ENCODE measurements at regions of chr15 and their contacts with region 1.

Region 1: GRCh38 chr15:98856218-98856907 is 151.2 kb downstream of the PGPEP1L start:
- DNase-seq: no peak

Region 2: GRCh38 chr15:98881526-98882520 is 25.5 kb after region 1 on chr15:
- CTCF ChIA-PET with region 1: interaction called, 14 read pairs
- POLR2A ChIA-PET with region 1: interaction called, 4 read pairs
- DNase-seq: peak; percentile 68